ENCODE measurements at regions of chr16 and their contacts with region 1.

Region 1: DNA sequence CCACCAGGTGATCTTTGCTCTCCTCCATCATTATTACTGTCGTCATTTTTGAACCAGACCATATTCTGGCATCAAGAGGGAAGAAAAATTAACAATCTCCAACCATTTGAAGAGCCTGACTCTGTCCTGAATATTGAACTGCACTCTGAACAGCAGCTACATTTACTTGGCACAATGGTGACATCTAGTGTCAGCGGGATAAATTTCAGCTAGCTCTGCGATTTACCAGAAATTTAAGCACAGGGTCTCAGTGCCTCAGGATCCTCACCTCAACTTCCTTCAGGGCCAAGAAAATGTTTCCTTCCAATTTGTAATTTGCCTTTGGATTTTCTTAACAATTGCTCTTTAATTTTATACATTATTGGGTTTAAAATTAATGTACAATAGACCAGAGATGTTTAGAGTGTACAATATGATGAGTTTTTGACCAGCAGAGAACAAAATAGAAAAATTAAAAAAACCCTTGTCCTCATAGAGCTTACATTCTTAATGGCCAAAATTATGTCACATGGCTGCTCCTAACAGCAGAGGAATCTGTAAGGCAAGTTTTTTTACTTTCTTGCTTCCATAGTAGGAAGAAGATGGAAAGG is 10.7 kb upstream of the ZNF19 start:
- ATAC-seq: peak in 7 of 8 experiments; percentile 57 to 85 (median 68)
- H3K4me3 ChIP-seq: no peak overlapping the region
- H3K27ac ChIP-seq: no peak overlapping the region
- H3K4me1 ChIP-seq: no peaks in the 10 kb centered on the region

Region 2: GRCh38 chr16:71412270-71413160 is 87.4 kb before region 1 on chr16:
- in situ Hi-C with region 1: loop called in 1 of 9 experiments (anchors 10 kb)
- ATAC-seq: peak; percentile 77 to 95 (median 90)
- H3K4me3 ChIP-seq: peak overlapping the region in 1 of 5 donors; percentile 17
- H3K27ac ChIP-seq: no peak overlapping the region
- H3K4me1 ChIP-seq: peaks cover 0 to 5% of the 10 kb centered on the region in 2 donors

Measured in motor neuron (in vitro differentiated cells).